Naive thymus-derived CD4-positive, alpha-beta T cell (primary cell): ENCODE measurements at regions of chr13 and their contacts with region 1.

Region 1: GRCh38 chr13:24709186-24709913 is 29.1 kb downstream of the ATP12A start:
- DNase-seq: peak; percentile 22 to 82 (median 74)
- ATAC-seq: peak; percentile 91
- H3K4me3 ChIP-seq: peak overlapping the region; percentile 17
- H3K4me3 Mint-ChIP-seq: peak overlapping the region; percentile 57 to 76 (median 74)
- H3K27ac ChIP-seq: peak overlapping the region; percentile 15
- H3K27ac Mint-ChIP-seq: peak overlapping the region; percentile 69 to 92 (median 90)
- H3K4me1 ChIP-seq: peaks cover 6 to 10% of the 10 kb centered on the region in 2 donors
- H3K4me1 Mint-ChIP-seq: peaks cover 4 to 36% (median 15%) of the 10 kb centered on the region in 7 donors
- H3K27me3 ChIP-seq: no peaks in the 10 kb centered on the region
- H3K27me3 Mint-ChIP-seq: peaks cover 0 to 11% (median 0%) of the 10 kb centered on the region in 5 donors

Region 2: DNA sequence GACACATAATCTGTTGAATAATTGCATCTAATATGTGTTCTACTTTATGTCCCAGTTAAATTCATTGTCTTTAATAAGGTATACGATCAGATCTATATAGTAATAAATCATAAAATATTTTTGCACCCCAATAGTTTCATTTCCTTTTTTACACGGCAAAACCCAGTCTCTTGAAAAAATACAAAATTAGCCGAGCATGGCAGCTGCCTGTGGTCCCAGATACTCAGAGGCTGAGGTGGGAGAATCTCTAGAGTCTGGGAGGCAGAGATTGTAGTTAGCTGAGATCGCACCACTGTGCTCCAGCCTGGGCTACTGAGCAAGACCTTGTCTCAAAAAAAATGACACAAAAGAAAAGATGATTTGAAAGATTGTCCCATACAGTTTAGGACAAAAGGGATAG is 144.5 kb before region 1 on chr13:
- CTCF ChIA-PET with region 1: no interaction called
- POLR2A ChIA-PET with region 1: no interaction called
- intact Hi-C with region 1: no loop called
- DNase-seq: no peak
- ATAC-seq: no peak
- H3K4me3 ChIP-seq: no peak overlapping the region
- H3K4me3 Mint-ChIP-seq: no peak overlapping the region
- H3K27ac ChIP-seq: no peak overlapping the region
- H3K27ac Mint-ChIP-seq: no peak overlapping the region
- H3K4me1 ChIP-seq: no peaks in the 10 kb centered on the region
- H3K4me1 Mint-ChIP-seq: peaks cover 0 to 3% (median under 1%) of the 10 kb centered on the region in 7 donors
- H3K27me3 ChIP-seq: peaks cover 0 to 4% of the 10 kb centered on the region in 2 donors
- H3K27me3 Mint-ChIP-seq: peaks cover 10 to 37% (median 19%) of the 10 kb centered on the region in 5 donors

Region 3: DNA sequence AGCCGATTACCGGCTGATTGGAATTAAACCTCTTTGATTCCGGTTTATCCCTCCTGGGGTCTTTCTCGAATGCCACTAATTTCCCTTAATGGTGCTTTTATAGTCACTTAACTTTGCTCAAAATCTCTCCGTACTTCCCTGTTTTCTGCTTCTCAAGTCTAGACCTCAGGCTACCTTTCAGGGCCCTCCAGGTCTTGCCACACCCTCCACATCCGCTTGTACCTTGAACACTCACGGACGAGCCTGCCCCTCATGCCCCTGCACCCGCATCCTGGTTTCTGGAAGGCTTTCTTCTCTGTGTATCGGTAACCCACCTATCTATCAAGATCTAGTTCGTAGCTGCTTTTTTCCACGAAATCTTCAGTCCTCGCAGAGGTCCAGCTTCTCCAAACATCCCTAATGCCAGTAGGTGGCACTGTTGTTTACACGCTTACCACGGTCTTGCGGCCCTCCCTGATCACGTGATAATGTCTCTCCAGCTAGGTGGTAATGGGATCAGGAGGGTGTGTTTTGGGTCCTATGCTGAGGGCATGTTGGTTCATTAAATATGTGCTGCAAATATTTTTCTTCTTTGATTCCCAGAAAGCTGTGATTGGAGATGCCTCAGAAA is 15.4 kb before region 1 on chr13:
- CTCF ChIA-PET with region 1: interaction called, 6 read pairs
- POLR2A ChIA-PET with region 1: interaction called, 5 read pairs
- intact Hi-C with region 1: loop called in 1 of 2 experiments (anchors 2 kb)
- DNase-seq: peak in 4 of 9 donors; percentile 21 to 37 (median 28)
- ATAC-seq: peak; percentile 70
- H3K4me3 ChIP-seq: no peak overlapping the region
- H3K4me3 Mint-ChIP-seq: peak overlapping the region in 8 of 10 donors; percentile 3 to 55 (median 38)
- H3K27ac ChIP-seq: no peak overlapping the region
- H3K27ac Mint-ChIP-seq: peak overlapping the region in 1 of 9 donors; percentile 82
- H3K4me1 ChIP-seq: peaks cover 4 to 7% of the 10 kb centered on the region in 2 donors
- H3K4me1 Mint-ChIP-seq: peaks cover 3 to 10% (median 6%) of the 10 kb centered on the region in 7 donors
- H3K27me3 ChIP-seq: peaks cover 0 to 11% of the 10 kb centered on the region in 2 donors
- H3K27me3 Mint-ChIP-seq: peaks cover 34 to 49% (median 44%) of the 10 kb centered on the region in 5 donors

Region 4: DNA sequence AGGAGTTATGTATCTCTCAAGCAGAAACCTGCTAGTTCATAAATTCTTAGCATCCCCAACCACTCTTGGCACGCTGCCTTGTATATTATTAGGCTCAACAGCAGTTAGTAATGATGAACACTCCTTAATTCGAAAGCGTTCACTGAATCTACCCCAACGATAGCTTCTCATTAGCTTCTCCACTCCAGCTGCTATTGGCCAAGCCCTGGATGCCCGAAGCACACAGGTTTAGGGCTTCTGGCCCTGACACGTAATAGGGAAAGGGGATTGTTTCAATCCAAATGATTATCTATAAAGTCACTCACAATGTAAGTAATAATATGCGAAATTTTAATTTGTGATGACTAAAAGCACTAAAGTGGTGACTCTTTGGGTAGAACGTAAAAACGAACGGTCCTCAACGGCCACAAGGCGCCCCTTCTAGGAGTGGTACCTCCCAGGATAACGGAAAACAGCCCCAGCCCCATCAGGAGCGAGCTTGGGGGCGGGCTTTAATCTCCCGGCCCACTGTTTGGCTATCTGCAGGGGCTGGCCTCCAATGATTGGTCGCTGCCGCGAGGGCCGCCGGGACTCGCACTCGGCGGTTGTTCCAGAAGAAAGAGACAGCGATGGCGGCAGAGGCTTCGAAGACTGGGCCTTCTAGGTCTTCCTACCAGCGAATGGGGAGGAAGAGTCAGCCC is 54.4 kb after region 1 on chr13 and contains the start of gene RNF17:
- CTCF ChIA-PET with region 1: no interaction called
- POLR2A ChIA-PET with region 1: no interaction called
- intact Hi-C with region 1: no loop called
- DNase-seq: no peak
- ATAC-seq: peak; percentile 50
- H3K4me3 ChIP-seq: no peak within 1 kb of the TSS
- H3K4me3 Mint-ChIP-seq: peak within 1 kb of the TSS in 1 of 10 donors; percentile 34
- H3K27ac ChIP-seq: no peak within 1 kb of the TSS
- H3K27ac Mint-ChIP-seq: no peak within 1 kb of the TSS
- H3K4me1 ChIP-seq: no peaks in the 10 kb centered on the region
- H3K4me1 Mint-ChIP-seq: no peaks in the 10 kb centered on the region
- H3K27me3 ChIP-seq: no peaks in the 10 kb centered on the region
- H3K27me3 Mint-ChIP-seq: peaks cover 0 to 14% (median 7%) of the 10 kb centered on the region in 5 donors
- total RNA-seq, gene RNF17: 0.24 to 1.1 TPM in 2 of 5 experiments, not detected in the others